ENCODE measurements at regions of chr18 and their contacts with region 1.

Region 1: DNA sequence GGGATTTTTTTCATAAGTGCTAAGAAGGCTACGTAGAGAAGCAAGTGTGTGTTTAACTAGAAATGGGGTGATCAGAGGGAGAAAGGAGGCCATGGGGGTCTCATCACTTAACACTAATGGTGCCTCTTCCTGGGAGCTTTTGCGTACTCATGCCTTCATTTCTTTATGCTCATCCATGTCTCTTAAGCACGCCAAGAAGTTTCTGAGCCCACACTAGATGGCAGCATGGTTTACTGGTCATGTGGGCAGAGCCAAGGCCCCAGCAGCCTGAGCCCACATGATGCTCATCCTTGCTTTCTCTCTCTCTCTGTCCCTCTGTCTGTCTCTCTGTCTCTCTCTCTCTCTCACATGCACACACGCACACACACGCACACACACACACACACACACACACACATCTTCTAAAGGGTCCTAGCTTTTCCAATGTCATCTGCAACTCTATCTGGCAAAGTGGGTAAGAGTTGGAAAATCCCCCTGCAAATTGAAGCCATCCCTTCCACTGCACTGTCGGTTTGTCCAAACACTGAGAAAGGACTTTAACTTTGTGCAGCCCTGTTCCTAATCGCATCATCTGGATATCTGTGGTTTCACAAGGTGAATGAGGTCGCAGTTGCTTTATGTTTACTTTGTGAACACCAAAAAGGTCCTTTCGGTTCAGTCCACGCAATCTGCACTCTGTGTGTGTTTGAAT is 137.1 kb upstream of the CCDC68 start:
- DNase-seq: no peak
- ATAC-seq: peak; percentile 84
- H3K4me3 ChIP-seq: no peak overlapping the region
- H3K27ac ChIP-seq: no peak overlapping the region
- H3K4me1 ChIP-seq: no peaks in the 10 kb centered on the region; the same call in 1 of the 2 replicates
- H3K27me3 ChIP-seq: no peaks in the 10 kb centered on the region
- CTCF ChIP-seq: peak; percentile 32 to 50 (median 39); a peak in 5 of 6 replicates
- EP300 ChIP-seq: no peak
- POLR2A ChIP-seq: no peak
- RAD21 ChIP-seq: peak; percentile 40

Region 2: DNA sequence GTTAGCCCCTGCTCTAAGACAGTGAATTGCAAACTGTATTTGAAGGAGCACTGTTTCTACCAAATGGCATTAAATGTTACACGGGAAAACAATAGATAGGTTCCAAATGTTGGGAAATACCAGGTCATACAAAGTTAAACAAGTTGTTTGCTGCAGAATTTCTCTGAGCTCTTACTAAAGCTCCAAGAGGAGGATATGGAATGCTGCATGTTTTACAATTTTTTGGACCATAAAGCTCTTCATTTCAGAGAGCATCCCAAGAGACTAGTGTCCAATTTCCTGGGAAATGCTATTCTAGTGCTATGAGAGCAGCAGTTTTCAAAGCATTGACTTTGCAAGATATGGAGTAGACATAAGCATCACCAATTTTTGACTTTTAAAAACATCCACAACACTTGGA is 18.5 kb after region 1 on chr18:
- CTCF ChIA-PET with region 1: no interaction called
- POLR2A ChIA-PET with region 1: interaction called, 10 read pairs
- RAD21 ChIA-PET with region 1: no interaction called
- SMC1A ChIA-PET with region 1: no interaction called
- in situ Hi-C with region 1: no loop called
- intact Hi-C with region 1: no loop called
- DNase-seq: no peak
- ATAC-seq: no peak
- H3K4me3 ChIP-seq: no peak overlapping the region
- H3K27ac ChIP-seq: no peak overlapping the region
- H3K4me1 ChIP-seq: no peaks in the 10 kb centered on the region
- H3K27me3 ChIP-seq: no peaks in the 10 kb centered on the region
- CTCF ChIP-seq: no peak
- EP300 ChIP-seq: no peak
- POLR2A ChIP-seq: no peak
- RAD21 ChIP-seq: no peak

Region 3: DNA sequence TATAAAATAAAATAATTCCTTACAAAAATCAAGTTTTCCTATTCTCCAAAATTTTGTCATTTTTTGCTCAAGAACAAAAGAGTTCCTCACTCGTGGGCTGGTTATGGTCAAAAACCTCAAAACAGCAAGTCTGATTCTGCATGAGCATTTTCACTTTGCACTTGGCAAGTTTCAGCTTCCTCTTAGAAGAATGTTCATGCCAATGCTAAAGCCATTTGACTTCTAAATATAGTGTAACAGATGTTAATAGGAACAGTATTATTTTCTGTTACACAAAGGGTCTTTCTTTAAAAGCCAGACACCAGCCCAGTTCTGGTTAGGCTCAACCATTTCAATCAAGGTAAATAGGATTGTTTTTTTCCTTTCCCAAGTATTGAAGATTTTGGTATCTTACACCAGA is 124.1 kb after region 1 on chr18:
- CTCF ChIA-PET with region 1: no interaction called
- POLR2A ChIA-PET with region 1: interaction called, 4 read pairs
- RAD21 ChIA-PET with region 1: no interaction called
- SMC1A ChIA-PET with region 1: no interaction called
- in situ Hi-C with region 1: no loop called
- intact Hi-C with region 1: loop called (anchors 10 kb)
- DNase-seq: peak; percentile 33
- ATAC-seq: peak; percentile 77
- H3K4me3 ChIP-seq: no peak overlapping the region
- H3K27ac ChIP-seq: no peak overlapping the region; the same call in 1 of the 2 replicates
- H3K4me1 ChIP-seq: peaks cover 14% of the 10 kb centered on the region
- H3K27me3 ChIP-seq: no peaks in the 10 kb centered on the region
- CTCF ChIP-seq: no peak
- EP300 ChIP-seq: no peak
- POLR2A ChIP-seq: no peak
- RAD21 ChIP-seq: no peak

Measured in GM12878 (cell line).